ENCODE measurements at regions of chr14 and their contacts with region 1.

Region 1: DNA sequence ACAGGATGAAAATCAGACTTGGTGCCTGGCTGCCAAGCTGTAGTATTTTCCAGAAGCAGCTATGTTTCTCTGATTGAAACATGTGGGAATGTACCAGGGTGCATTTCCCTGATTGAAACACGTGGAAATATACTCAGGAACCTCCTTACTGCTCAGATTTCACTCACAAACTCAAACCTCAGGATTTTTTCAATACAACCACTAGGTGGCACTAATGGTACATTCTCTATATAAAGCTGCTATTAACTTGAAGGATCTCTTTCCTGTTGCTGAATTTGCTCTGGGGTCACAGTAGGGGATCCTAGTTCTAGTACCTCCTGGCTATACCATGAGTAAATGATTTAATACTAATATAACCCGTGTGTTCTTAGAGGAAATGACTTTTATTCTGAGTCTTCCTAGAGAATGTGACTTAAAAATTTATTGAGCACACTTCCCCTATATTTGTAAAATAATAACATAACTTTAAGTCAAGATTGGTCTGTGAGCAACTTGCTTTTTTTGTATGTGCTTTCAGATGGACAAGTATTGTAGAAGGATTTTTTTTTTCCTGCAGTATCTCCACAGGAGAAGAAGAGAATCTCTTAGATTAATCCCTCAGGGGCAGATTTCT is 173.8 kb upstream of the MIS18BP1 start:
- DNase-seq: no peak
- H3K4me3 ChIP-seq: no peak overlapping the region
- CTCF ChIP-seq: no peak
- POLR2A ChIP-seq: no peak

Region 2: GRCh38 chr14:45810152-45810872 is 383.5 kb after region 1 on chr14:
- intact Hi-C with region 1: loop called (anchors 10 kb)
- DNase-seq: no peak
- H3K4me3 ChIP-seq: no peak overlapping the region
- CTCF ChIP-seq: no peak
- POLR2A ChIP-seq: no peak

Measured in lower leg skin (tissue), 4 donors.